Lower leg skin (tissue), 4 donors: ENCODE measurements at regions of chrX and their contacts with region 1.

Region 1: DNA sequence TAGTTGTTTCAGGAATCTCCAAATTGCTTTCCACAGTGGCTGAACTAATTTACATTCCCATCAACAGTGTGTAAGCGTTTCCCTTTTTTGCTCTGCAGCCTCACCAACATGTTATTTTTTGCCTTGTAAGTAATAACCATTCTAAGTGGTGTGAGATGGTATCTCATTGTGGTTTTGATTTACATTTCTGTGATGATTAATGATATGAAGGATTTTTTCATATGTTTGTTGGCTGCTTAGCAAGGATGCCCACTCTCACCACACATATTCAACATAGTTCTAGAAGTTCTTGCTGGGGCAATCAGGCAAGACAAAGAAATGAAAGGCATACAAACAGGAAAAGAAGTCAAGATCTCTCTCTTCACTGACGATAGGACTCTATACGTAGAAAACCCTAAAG is 472.4 kb downstream of the ZNF674 start:
- DNase-seq: no peak
- H3K4me3 ChIP-seq: no peak overlapping the region
- CTCF ChIP-seq: no peak
- POLR2A ChIP-seq: no peak

Region 2: DNA sequence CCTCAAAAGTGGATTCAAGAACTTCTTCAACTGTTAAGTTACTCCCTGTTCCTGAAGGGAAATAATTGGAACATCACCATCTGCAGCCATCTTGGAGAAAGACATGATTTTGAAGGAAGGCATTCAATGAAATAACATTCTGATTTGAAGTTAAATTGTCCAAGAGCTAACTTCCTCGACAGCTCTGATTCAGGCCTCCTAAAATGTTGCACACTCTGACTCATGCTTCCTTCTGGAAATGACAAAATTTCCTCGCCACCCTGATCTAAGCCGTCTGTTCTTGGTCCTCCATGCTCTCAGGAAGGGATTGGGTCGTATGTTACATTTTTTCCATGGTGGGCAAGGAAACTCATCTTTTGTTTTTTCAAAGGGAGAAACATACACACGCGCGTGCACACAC is 375.2 kb before region 1 on chrX:
- intact Hi-C with region 1: loop called (anchors 10 kb)
- DNase-seq: no peak
- H3K4me3 ChIP-seq: no peak overlapping the region
- CTCF ChIP-seq: no peak
- POLR2A ChIP-seq: no peak